GM10248 (cell line): ENCODE measurements at regions of chr3 and their contacts with region 1.

Region 1: GRCh38 chr3:128095222-128095703 is 28.3 kb downstream of the RUVBL1 start:
- DNase-seq: peak; percentile 84
- CTCF ChIP-seq: peak; percentile 88

Region 2: GRCh38 chr3:127735767-127736704 is 359.2 kb before region 1 on chr3:
- CTCF ChIA-PET with region 1: no interaction called
- POLR2A ChIA-PET with region 1: no interaction called
- DNase-seq: peak; percentile 60
- CTCF ChIP-seq: no peak

Region 3: GRCh38 chr3:127817396-127817841 is 277.8 kb before region 1 on chr3:
- CTCF ChIA-PET with region 1: no interaction called
- POLR2A ChIA-PET with region 1: no interaction called
- DNase-seq: no peak
- CTCF ChIP-seq: no peak

Region 4: DNA sequence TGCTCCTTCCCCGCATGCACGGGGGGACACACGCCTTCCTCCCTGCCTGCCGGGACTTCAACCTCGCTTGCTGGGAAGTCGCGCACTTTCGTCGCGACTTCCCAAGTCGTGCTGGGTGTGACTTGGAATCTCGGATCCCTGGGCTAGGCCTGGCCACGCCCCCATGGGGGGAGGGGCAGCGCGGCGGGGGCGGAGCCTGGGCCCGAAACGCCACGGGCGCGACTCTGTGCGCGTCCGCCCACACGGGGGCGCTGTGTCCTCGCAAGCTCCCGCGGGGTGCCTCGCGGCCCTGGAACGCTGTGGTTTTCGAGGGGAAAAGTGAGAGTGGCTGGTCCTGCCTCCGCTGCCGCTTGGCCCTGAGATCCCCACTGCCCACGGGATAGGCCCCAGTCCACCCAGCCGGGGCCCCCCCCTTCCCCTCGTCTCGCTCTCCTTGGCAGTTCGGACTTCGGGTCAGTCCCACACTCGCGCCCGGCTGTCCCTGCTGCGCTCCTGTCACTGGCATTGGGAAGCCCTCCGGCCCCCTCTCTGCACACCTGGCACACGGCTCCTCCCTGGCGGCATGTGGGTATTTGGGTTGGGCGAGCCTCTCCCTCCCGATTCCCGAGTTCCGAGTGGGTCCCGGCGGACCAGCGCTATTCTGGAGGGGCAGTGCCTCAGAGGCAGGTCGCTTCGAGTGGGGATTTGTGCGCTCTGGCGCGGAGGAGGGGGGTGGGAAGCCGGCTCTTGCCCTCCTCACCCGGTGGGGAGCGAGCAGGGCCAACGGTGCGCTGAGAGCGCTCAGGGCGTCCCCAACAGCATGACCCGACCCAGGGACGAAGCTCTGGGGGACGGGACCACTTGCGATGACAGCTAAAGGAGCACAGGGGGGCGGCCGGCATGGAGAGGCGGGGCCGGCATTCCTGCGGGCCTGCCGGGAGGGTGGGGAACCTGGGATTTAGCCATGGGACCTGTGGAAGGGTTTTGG is 19.5 kb before region 1 on chr3:
- CTCF ChIA-PET with region 1: interaction called, 12 read pairs
- POLR2A ChIA-PET with region 1: no interaction called
- DNase-seq: peak; percentile 89
- CTCF ChIP-seq: peak; percentile 95

Region 5: GRCh38 chr3:128112357-128112968 is 17.2 kb after region 1 on chr3:
- CTCF ChIA-PET with region 1: interaction called, 40 read pairs
- POLR2A ChIA-PET with region 1: no interaction called
- DNase-seq: no peak
- CTCF ChIP-seq: no peak

Region 6: DNA sequence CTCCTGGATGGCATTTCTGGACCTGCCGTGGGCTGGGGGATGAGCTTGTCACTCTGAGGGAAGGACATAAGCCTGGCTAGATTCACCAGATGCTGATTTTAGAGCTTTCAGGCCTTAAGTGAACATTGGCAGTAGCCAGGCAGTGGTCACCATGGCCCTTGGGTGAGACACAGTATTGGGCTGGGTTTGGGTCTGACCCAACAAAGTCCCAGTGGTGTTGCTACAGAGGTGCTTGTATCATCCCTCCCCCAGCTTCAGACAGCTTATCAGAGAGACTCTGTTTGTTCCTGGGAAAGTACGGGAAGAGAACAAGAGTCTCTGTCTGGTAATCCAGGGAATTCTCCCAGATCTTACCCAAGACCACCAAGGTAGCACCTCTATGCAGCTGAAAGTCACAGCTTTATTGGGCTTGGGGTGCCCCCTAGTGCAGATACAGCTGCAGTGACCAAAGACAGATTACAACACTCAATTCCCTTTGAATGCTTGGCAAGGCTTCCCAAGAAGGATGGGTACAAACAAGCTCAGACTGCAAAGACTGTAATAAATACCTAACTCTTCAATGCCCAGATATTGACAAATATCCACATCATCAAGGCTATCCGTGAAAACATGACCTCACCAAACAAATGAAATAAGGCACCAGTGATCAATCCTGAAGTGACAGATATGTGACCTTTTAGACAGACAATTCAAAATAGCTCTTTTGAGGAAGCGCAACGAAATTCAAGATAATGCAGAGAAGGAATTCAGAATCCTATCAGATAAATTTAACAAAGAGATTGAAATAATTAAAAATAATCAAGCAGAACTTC is 38.2 kb after region 1 on chr3:
- CTCF ChIA-PET with region 1: interaction called, 86 read pairs
- POLR2A ChIA-PET with region 1: no interaction called
- DNase-seq: no peak
- CTCF ChIP-seq: peak; percentile 71

Region 7: GRCh38 chr3:128607710-128608048 is 512.4 kb after region 1 on chr3:
- CTCF ChIA-PET with region 1: interaction called, 18 read pairs
- POLR2A ChIA-PET with region 1: no interaction called
- DNase-seq: no peak
- CTCF ChIP-seq: no peak